ENCODE measurements at regions of chr2 and their contacts with region 1.

Region 1: GRCh38 chr2:207710814-207711740 is at the start of gene CCNYL1:
- DNase-seq: peak; percentile 100
- total RNA-seq, gene CCNYL1: 17.8 to 34.5 TPM

Region 2: DNA sequence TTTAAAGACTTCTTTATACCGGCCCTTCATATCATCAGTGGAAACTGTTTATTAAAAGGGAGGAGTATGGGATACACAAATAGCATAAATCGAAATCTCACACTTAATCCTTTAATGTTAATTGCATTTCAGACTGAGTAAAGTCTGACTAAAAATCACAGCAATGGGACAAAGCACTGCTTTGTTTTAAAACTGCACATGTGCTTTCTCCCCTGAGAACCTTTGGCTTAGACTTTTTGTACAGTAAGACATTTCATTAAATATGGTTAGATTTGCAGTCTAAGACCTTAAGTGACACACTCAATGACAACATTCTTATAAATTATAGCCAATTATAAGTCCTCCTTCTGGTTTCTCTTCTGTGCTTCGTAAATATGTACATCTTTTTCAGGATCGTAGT is 98.4 kb before region 1 on chr2:
- intact Hi-C with region 1: no loop called
- DNase-seq: no peak

Region 3: GRCh38 chr2:207625018-207625907 is 85.8 kb before region 1 on chr2 and contains the start of gene METTL21A:
- intact Hi-C with region 1: loop called in 1 of 2 experiments (anchors 5 kb)
- DNase-seq: peak; percentile 96
- total RNA-seq, gene METTL21A: 7.4 to 8.2 TPM

Region 4: GRCh38 chr2:207635468-207636200 is 75.4 kb before region 1 on chr2:
- intact Hi-C with region 1: loop called in 1 of 2 experiments (anchors 5 kb)
- DNase-seq: no peak